ENCODE measurements at regions of chr16 and their contacts with region 1.

Region 1: GRCh38 chr16:19583665-19584300 is 28.3 kb downstream of the VPS35L start:
- DNase-seq: peak; percentile 71
- H3K4me3 ChIP-seq: no peak overlapping the region
- H3K27ac ChIP-seq: no peak overlapping the region
- H3K4me1 ChIP-seq: no peaks in the 10 kb centered on the region
- H3K27me3 ChIP-seq: no peaks in the 10 kb centered on the region
- CTCF ChIP-seq: peak; percentile 95

Region 2: GRCh38 chr16:19595043-19595767 is 11.4 kb after region 1 on chr16:
- CTCF ChIA-PET with region 1: interaction called, 11 read pairs
- POLR2A ChIA-PET with region 1: no interaction called
- intact Hi-C with region 1: no loop called
- DNase-seq: no peak
- H3K4me3 ChIP-seq: no peak overlapping the region
- H3K27ac ChIP-seq: no peak overlapping the region
- H3K4me1 ChIP-seq: no peaks in the 10 kb centered on the region
- H3K27me3 ChIP-seq: no peaks in the 10 kb centered on the region
- CTCF ChIP-seq: no peak

Region 3: GRCh38 chr16:20314575-20314974 is 730.8 kb after region 1 on chr16:
- CTCF ChIA-PET with region 1: interaction called, 10 read pairs
- POLR2A ChIA-PET with region 1: no interaction called
- intact Hi-C with region 1: no loop called
- DNase-seq: no peak
- H3K4me3 ChIP-seq: no peak overlapping the region
- H3K27ac ChIP-seq: no peak overlapping the region
- H3K4me1 ChIP-seq: no peaks in the 10 kb centered on the region
- H3K27me3 ChIP-seq: peaks cover 17% of the 10 kb centered on the region
- CTCF ChIP-seq: no peak

Measured in A673 (cell line).